ENCODE measurements at regions of chr1 and their contacts with region 1.

Region 1: DNA sequence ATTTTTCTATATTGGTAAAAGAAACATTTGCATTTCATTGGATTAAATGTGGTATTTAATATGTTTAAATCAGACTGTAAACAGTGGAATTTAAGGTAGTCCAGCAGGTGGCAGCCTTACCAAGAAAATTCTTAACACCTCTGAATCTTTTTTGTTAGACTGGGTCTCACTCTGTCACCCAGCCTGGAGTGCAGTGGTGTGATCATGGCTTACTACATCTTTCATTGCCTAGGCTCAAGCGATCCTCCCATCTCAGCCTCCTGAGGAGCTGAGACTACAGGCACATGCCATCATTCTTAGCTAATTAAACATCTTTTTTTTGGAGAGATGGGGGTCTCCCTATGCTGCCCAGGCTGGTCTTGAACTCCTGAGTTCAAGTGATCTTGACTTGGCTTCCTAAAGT is 98.8 kb downstream of the RABGAP1L start:
- DNase-seq: peak in 3 of 5 donors; percentile 50 to 66 (median 53)
- H3K4me3 ChIP-seq: no peak overlapping the region
- H3K27ac ChIP-seq: no peak overlapping the region
- H3K4me1 ChIP-seq: no peaks in the 10 kb centered on the region
- H3K27me3 ChIP-seq: no peaks in the 10 kb centered on the region
- CTCF ChIP-seq: peak; percentile 47

Region 2: GRCh38 chr1:174743654-174744561 is 485.8 kb after region 1 on chr1:
- intact Hi-C with region 1: loop called (anchors 10 kb)
- DNase-seq: peak in 2 of 5 donors; percentile 35 to 63
- H3K4me3 ChIP-seq: no peak overlapping the region
- H3K27ac ChIP-seq: no peak overlapping the region
- H3K4me1 ChIP-seq: no peaks in the 10 kb centered on the region
- H3K27me3 ChIP-seq: no peaks in the 10 kb centered on the region
- CTCF ChIP-seq: peak; percentile 67